AG04449 (cell line): ENCODE measurements at regions of chr20 and their contacts with region 1.

Region 1: GRCh38 chr20:44217342-44218092 is 6.9 kb upstream of the OSER1 start:
- DNase-seq: no peak
- H3K4me3 ChIP-seq: no peak overlapping the region
- CTCF ChIP-seq: peak; percentile 85

Region 2: GRCh38 chr20:43666376-43667328 is 550.9 kb before region 1 on chr20 and contains the start of gene MYBL2:
- CTCF ChIA-PET with region 1: no interaction called
- POLR2A ChIA-PET with region 1: no interaction called
- DNase-seq: no peak
- H3K4me3 ChIP-seq: peak within 1 kb of the TSS; percentile 60
- CTCF ChIP-seq: no peak

Region 3: GRCh38 chr20:44050925-44051660 is 166.4 kb before region 1 on chr20:
- CTCF ChIA-PET with region 1: no interaction called
- POLR2A ChIA-PET with region 1: no interaction called
- DNase-seq: no peak
- H3K4me3 ChIP-seq: no peak overlapping the region
- CTCF ChIP-seq: no peak

Region 4: DNA sequence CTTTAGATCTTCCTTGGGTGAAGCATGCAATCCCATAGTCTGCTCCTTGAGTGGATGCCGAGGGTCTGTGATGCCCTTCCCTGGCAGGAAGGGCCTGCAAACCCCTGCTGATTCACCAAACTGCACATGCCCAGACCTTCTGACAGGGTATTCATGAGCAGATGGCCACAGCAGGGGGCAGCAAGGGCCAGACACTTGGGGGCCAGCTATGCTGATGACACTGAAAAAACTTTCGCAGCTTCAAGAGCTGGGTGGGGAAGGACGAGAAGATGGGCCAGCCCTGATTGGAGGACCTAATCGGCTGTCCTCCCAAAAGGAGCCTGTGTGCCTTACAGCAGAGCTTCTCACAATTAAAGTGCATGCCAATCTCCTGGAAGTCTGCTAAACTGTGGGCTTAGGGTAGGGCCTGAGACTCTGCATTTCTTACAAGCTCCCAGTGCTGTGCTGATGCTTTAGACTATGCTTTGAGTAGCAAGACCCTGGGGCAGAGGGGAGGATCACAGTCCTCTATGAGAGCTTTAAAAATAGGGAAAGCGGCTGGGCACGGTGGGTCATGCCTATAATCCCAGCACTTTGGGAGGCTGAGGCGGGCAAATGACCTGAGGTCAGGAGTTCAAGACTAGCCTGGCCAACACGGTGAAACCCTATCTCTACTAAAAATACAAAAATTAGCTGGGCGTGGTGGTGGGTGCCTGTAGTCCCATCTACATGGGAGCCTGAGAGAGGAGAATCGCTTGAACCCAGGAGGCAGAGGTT is 14.4 kb after region 1 on chr20:
- CTCF ChIA-PET with region 1: interaction called, 44 read pairs
- POLR2A ChIA-PET with region 1: no interaction called
- DNase-seq: no peak
- H3K4me3 ChIP-seq: no peak overlapping the region
- CTCF ChIP-seq: no peak

Region 5: GRCh38 chr20:44326391-44327159 is 109.1 kb after region 1 on chr20:
- CTCF ChIA-PET with region 1: interaction called, 16 read pairs
- POLR2A ChIA-PET with region 1: no interaction called
- DNase-seq: no peak
- H3K4me3 ChIP-seq: no peak overlapping the region
- CTCF ChIP-seq: no peak

Region 6: DNA sequence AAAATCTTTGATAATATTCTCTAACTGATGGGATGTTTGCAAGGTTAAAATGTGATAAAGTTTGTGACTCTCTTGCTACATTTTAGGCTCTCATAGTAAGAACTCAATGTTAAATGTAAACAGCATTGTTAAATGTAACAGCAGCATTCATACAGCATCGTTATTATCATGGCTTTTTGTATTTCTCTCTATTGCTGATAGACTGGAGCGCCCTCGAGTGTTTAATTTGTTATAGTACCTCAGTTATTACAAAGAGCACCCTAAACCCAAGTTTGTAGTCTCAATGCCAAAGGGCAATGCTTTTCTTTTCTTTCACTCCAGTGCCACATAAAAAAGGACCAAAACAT is 243.3 kb after region 1 on chr20:
- CTCF ChIA-PET with region 1: interaction called, 133 read pairs
- POLR2A ChIA-PET with region 1: no interaction called
- DNase-seq: no peak
- H3K4me3 ChIP-seq: no peak overlapping the region
- CTCF ChIP-seq: peak; percentile 9

Region 7: DNA sequence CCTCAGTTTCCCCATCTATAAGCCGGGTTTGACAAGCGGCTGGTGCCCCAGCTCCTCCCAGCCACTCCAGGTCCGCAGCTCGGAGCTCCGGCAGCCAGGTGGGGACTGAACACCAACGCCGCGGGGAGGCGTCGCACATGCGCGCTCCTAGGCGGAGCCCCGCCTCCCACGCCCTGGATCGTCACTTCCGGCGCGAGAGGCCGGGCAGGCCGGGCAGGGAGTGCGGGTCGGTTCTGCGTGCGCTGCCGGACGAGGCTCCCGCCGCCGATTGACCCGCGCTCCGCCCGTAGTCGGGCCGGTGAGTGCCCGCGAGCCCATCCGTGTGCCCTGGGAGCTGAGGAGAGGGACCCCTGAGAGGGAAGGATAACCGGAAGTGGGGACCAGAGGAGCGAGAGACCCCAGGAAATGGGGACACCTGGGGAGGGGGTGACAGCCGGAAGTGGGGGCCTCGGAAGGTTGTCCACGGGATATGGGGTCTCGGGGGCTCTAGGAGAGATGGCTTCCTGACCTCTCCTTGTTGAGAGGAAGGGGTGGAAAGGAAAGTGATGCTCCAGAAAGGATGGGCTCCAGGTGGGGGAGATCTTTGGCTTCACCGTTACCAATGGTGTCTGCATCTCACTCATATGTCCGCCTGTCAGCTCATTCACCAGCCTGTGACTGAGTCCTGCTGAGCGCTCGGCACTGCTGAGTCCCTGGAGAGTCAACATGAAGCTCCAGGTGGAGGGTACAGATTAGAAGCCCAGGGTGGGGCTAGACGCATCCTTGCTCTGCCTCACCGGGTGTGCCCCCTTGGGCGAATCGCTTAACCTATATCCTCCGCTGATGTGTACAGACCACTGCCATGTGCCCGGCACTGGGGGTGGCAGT is 258.4 kb after region 1 on chr20 and contains the start of gene TTPAL:
- CTCF ChIA-PET with region 1: interaction called, 133 read pairs
- POLR2A ChIA-PET with region 1: no interaction called
- DNase-seq: no peak
- H3K4me3 ChIP-seq: peak within 1 kb of the TSS; percentile 96
- CTCF ChIP-seq: peak; percentile 50

Region 8: GRCh38 chr20:44532259-44532980 is 314.9 kb after region 1 on chr20:
- CTCF ChIA-PET with region 1: no interaction called
- POLR2A ChIA-PET with region 1: no interaction called
- DNase-seq: no peak
- H3K4me3 ChIP-seq: peak overlapping the region; percentile 70
- CTCF ChIP-seq: no peak

Region 9: GRCh38 chr20:44869471-44869870 is 652.0 kb after region 1 on chr20:
- CTCF ChIA-PET with region 1: no interaction called
- POLR2A ChIA-PET with region 1: no interaction called
- DNase-seq: no peak
- H3K4me3 ChIP-seq: no peak overlapping the region
- CTCF ChIP-seq: no peak